ENCODE measurements at regions of chr15 and their contacts with region 1.

Region 1: DNA sequence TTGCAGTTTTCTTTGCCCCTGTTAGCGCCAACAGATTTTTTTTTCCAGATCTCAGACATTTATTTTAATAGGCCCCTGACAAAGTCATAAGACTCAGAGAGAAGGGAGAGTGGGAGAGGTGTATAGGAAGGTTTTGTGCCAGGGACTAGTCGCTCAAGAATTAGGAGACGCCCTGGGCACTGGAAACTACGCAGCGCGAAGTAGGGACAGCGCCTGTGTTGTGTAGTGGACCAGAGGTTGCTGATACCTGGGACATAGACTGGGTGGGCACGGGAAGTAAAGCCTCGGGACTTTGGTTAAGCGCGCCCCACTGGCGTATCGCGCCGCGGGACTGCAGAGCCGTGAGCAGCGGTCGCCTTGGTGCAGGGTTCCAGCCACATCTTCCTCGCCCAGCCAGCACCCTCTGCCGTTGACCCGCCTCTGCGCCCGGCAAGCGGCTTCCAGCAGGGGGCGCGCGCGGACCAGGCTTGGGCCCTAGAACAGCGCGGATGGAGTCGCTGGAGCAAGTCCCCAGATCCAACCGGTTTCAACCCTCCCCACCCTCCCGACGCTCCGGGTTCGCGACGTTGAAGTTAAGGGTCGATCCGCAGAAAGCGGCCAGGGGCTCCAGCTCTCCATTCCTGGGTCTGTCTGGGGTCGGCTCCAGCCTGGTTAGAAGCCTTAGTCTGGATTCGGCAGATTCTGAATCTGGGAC is 3.0 kb upstream of the ISLR2 start:
- DNase-seq: peak; percentile 84
- H3K4me3 Mint-ChIP-seq: peak overlapping the region; percentile 46
- H3K27ac Mint-ChIP-seq: no peak overlapping the region
- H3K4me1 Mint-ChIP-seq: no peaks in the 10 kb centered on the region
- H3K27me3 Mint-ChIP-seq: peaks cover 87% of the 10 kb centered on the region
- CTCF ChIP-seq: peak; percentile 98

Region 2: GRCh38 chr15:74179341-74179841 is 52.0 kb after region 1 on chr15:
- CTCF ChIA-PET with region 1: interaction called, 3 read pairs
- POLR2A ChIA-PET with region 1: no interaction called
- intact Hi-C with region 1: loop called (anchors 1 kb)
- DNase-seq: peak; percentile 98
- H3K4me3 Mint-ChIP-seq: no peak overlapping the region
- H3K27ac Mint-ChIP-seq: peak overlapping the region; percentile 41
- H3K4me1 Mint-ChIP-seq: peaks cover 38% of the 10 kb centered on the region
- H3K27me3 Mint-ChIP-seq: no peaks in the 10 kb centered on the region
- CTCF ChIP-seq: no peak

Region 3: DNA sequence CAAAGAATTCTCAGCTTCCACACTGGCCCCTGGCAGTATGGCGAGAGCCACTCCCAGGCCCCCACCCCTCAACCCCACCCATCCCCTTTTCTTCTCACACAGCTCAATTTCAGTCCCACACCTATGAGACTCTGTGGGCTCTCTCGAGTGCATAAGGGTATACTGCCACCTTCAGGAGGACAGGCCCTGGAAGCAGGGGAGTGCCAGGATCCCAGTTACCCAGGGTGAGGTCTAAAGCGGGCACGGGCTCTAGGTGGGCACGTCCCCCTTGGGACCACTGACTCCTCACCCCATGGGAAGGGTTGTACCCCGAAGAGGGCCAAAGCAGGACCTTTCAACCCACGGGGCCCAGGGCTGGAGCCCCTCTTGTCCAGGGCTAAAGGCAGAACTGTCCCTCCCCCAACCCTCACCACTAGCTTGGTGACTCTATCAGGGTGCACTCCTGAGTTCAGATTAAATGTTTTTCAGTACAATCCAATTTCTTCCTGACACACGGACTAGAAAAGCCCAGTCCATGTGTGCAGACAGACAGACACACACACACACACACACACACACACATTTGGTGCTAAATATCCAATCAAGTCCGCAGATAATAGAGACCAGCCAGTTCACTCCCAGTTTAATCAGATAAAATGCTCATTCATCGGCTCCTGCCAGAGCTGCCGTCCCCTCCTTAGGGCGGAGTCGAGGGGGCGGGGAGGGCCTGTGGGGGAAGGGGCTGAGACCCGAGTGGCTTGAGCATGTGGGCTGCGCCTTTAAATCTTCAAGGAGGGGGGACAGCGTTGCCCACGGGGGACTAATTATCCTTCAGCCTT is 180.6 kb after region 1 on chr15:
- CTCF ChIA-PET with region 1: interaction called, 46 read pairs
- POLR2A ChIA-PET with region 1: no interaction called
- intact Hi-C with region 1: loop called (anchors 1 kb)
- DNase-seq: peak; percentile 77
- H3K4me3 Mint-ChIP-seq: no peak overlapping the region
- H3K27ac Mint-ChIP-seq: no peak overlapping the region
- H3K4me1 Mint-ChIP-seq: peaks cover 5% of the 10 kb centered on the region
- H3K27me3 Mint-ChIP-seq: peaks cover 60% of the 10 kb centered on the region
- CTCF ChIP-seq: peak; percentile 73